WTC11 (cell line): ENCODE measurements at regions of chr14 and their contacts with region 1.

Region 1: DNA sequence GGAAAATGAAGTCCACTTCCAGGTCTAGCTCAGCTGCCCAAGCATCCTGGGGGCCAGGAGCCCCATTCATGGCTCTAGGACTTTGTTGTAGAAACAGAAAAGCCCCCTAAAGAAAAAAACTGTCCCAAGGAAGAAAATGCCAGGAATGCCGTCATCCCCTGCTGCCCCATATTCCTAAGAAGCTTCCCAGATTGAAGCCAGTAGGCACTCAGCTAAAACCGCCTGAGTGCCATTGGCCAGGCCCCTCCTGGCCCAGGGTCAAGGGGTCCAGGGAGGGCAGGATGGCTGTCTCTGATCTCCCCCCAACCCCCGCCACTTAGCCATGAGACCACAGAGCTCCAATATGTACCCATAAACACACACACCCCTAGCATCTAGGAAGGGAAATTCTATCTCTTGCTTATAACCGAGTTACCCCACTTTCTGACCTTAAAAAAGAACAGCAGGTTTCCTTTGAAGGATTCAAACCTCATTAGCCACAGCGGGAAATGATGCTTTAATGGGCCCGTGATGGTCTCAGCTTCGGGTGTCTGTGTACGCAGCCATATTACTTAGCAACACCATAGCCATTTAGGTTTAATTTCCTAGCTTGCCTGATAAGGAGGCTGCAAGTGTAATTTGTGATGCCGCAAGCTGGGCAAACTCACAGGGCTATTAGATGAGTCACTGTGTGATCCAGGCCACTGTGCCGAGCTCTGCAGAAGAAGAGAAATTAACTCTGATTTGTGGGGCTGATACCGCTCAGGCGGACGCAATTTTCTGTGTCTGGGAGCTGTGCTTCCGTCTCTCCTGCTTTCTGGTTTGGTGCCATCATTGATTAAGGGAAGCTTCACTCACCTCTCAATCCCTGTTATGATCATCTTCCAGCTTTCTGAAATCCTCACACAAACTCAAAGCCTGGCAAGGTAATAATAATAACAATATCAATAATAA is 84.2 kb downstream of the GCH1 start:
- DNase-seq: no peak
- ATAC-seq: no peak
- H3K4me3 Mint-ChIP-seq: no peak overlapping the region
- H3K27ac Mint-ChIP-seq: no peak overlapping the region
- H3K4me1 Mint-ChIP-seq: no peaks in the 10 kb centered on the region
- H3K27me3 Mint-ChIP-seq: no peaks in the 10 kb centered on the region
- CTCF ChIP-seq: no peak

Region 2: DNA sequence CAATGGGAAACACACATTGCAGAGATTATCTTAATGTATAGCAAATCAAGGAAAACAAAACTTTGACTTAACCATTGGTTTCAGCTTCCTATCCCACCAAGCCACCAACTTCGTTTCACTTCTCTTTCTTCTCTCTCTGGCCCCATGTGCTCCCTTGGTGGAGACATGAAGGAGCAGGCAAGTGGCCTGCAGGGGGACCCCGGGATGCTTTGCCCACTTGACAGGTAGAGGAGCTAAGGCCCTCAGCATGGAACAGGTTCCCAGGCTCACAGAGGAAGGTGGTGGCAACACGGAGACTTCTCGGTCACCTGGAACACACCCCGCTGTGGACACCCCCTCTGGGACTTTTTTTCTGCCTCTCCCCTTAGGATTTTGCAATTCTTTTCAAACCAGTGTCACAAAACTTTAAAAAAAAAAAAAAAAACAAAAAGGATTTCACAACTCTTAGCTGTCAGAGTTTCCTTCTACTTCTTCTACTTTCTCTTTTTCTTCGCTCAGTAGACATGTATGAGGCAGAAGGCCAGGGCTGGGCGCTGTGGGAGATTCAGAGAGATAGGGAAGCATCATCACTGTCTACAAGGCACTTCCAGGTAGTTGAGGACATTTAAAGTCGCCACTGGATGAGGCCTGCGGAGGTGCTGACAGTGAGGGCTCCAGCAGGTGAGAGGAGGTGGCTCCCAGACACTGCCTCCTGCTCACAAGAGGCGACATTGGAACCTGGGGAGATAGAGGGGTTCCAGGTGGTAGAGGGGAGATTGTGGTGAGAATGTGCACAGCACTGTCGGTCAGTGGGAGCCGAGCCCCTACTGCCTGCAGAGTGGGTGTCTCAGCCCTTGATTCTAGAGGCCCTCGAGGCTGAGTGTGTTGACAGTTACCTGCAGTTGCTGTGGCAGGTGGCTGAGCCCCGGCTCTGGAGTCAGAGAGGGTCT is 35.5 kb before region 1 on chr14:
- CTCF ChIA-PET with region 1: interaction called, 15 read pairs
- POLR2A ChIA-PET with region 1: no interaction called
- DNase-seq: peak; percentile 51
- ATAC-seq: peak; percentile 82
- H3K4me3 Mint-ChIP-seq: no peak overlapping the region
- H3K27ac Mint-ChIP-seq: no peak overlapping the region
- H3K4me1 Mint-ChIP-seq: peaks cover 8% of the 10 kb centered on the region
- H3K27me3 Mint-ChIP-seq: no peaks in the 10 kb centered on the region
- CTCF ChIP-seq: no peak

Region 3: DNA sequence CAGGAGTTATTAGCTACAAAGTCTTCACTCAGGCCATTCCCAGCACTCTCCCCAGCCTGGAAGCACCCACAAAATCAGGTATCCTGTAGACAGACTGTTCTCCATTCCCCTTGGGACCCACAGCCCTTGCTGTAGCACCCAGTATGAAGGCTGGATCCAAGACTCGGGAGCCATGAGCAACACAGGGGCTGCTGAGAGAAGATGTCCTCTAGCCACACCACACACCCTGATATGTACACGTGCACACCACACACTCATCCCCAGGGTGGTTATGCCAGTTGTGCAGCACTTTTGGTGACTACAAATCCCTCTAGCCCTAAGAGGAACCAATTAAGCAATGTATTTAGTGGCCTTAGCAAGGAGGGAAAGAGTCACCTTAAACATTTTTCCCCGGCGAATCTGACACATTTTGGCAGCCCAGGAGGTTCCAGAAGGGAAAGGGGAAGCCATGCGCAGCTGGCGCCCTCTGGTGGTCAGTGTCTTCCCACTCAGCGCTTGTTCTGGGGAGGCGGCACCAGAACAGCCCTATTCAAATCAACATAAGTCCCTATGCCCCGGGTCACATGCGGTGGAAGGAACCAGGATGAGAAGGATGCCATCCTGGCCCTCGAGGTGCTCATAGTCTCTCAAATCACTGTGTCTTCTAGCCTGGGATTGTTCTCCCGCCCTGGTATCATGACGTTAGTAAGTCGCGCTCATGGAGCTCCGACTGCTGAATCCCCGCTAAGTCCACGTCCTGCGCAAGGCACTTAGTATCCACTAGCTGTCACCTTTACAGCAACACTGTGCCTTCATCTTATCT is 12.7 kb before region 1 on chr14:
- CTCF ChIA-PET with region 1: interaction called, 37 read pairs
- POLR2A ChIA-PET with region 1: no interaction called
- DNase-seq: peak; percentile 93
- ATAC-seq: peak; percentile 85
- H3K4me3 Mint-ChIP-seq: no peak overlapping the region
- H3K27ac Mint-ChIP-seq: no peak overlapping the region
- H3K4me1 Mint-ChIP-seq: peaks cover 21% of the 10 kb centered on the region
- H3K27me3 Mint-ChIP-seq: peaks cover 9% of the 10 kb centered on the region
- CTCF ChIP-seq: peak; percentile 95

Region 4: GRCh38 chr14:54854181-54854580 is 35.7 kb after region 1 on chr14:
- CTCF ChIA-PET with region 1: interaction called, 12 read pairs
- POLR2A ChIA-PET with region 1: interaction called, 3 read pairs
- DNase-seq: peak; percentile 37
- ATAC-seq: peak; percentile 99
- H3K4me3 Mint-ChIP-seq: no peak overlapping the region
- H3K27ac Mint-ChIP-seq: no peak overlapping the region
- H3K4me1 Mint-ChIP-seq: peaks cover 16% of the 10 kb centered on the region
- H3K27me3 Mint-ChIP-seq: no peaks in the 10 kb centered on the region
- CTCF ChIP-seq: no peak